AG04450 (cell line): ENCODE measurements at regions of chr7 and their contacts with region 1.

Region 1: DNA sequence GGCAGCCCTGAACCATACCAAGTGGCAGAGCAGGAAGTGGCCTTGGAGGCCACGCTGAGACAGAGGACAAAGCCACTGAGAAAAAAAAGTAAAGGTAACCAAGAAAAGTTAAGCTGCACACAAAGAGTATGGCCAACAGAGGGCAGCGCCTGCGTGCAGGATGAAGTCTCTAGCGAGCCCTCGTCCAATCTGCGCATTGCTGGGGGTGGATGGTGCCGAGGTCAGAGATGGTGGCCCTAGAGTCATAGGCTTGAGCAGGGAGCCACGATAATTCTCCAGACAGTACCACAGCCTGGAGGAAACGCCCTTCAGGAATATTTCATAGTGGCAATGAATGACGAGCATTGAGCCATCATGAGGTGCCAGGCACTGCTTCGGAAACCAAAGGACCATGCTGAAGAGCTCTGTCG is 9.7 kb downstream of the ATP6V0E2 start:
- DNase-seq: no peak
- H3K4me3 ChIP-seq: no peak overlapping the region
- H3K27ac ChIP-seq: no peak overlapping the region
- H3K27me3 ChIP-seq: no peaks in the 10 kb centered on the region
- CTCF ChIP-seq: peak; percentile 81

Region 2: DNA sequence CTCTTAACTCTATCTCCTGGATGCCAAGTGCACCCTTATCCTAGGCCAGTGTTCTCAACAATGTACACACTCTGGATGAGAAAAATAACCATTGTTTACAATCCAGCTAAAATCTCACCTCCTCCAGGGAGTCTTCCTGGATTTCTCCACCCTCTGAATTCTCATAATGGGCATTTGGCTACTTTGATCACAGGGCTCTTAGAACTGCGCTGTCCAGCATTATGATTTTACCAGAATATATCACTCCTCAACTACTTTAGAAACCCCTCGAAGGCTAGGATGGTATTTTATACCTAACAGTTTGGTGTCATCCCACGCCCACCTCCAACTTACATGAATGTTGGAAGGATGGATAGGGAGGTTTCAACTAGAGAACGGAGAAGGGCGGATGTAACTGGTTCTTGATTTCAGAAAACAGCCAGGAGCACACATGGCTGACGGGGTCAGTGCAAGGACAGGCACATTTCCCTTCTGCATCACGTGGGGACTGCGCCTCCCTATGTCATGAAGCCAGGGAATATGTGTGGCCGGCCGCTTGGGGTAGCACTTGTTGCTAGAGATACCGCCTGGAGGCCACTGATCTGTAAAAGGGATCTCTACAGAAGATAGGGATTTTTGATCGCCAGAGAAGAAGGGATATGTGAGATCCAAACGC is 10.9 kb before region 1 on chr7:
- CTCF ChIA-PET with region 1: interaction called, 18 read pairs
- POLR2A ChIA-PET with region 1: no interaction called
- DNase-seq: no peak
- H3K4me3 ChIP-seq: peak overlapping the region; percentile 78
- H3K27ac ChIP-seq: peak overlapping the region; percentile 75
- H3K27me3 ChIP-seq: no peaks in the 10 kb centered on the region
- CTCF ChIP-seq: peak; percentile 42